ENCODE measurements at regions of chr12 and their contacts with region 1.

Region 1: DNA sequence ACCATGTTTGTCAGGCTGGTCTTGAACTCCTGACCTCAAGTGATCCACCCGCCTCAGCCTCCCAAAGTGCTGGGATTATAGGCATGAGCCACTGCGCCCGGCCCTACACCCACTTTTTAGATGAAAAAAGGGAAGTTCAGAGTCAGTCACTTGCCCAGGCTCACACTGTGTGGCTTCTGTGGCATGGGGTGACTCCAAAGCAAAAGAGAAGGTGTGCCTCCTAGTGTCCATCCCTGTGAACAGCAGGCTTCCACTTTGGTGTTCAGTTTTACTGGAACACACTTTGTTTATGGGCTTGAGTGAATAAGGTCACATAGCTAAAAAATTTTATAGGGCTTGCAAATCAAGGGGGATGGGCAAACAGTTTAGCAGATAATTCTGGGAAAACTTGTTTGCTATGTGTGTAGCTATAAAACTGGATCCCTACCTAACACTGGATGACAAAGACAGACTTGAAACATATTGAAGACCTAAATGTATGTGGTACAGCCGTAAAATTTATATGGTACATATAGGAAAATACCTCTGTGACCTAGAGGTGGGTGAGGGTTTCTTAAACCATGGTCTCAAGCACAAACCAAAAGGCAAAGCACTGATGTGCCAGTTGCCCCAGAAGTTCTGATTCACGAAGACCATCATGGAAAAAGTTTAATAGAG is 54.9 kb downstream of the EID3 start:
- DNase-seq: peak in 1 of 2 experiments; percentile 74
- H3K4me3 ChIP-seq: no peak overlapping the region
- H3K27ac ChIP-seq: no peak overlapping the region
- H3K4me1 ChIP-seq: no peaks in the 10 kb centered on the region
- H3K27me3 ChIP-seq: no peaks in the 10 kb centered on the region
- CTCF ChIP-seq: peak; percentile 71 to 93 (median 77)
- EP300 ChIP-seq: no peak
- POLR2A ChIP-seq: no peak
- RAD21 ChIP-seq: peak; percentile 85

Region 2: DNA sequence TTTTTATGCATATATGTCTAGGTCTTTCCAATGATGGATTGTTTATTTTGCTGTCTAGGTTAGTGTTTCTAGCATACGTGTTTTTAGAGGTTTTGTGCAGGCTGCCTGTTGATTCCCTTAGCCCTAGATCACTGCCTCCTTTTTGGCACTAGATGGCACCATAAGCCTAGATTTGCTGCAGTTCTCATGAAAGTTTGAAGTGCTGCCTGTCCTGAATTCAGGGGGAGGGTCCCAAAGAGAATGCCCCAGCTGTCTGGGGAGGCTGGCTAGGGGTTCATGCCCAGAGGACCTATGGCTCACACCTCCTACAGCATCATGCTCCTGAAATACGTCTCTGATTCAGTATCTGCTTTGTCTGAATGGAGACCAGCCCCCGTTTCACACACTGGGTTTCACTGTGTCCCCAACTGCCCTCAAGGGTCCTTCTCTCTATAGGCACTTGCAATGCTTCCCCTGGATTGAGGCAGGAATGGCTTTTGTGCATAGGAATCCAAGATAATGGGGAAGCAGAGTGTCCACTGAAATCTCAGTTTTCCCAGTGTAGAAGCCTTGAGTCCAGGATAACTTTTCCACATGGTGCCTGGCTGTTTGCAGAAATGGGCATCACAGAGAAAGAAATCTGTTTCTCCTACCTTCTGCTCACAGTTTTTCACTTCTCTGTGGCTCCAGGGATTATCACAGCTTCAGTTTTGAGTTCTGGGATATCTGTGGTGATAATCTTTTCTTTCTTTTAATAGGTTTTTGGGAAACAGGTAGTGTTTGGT is 157.1 kb before region 1 on chr12:
- CTCF ChIA-PET with region 1: interaction called, 12 read pairs
- POLR2A ChIA-PET with region 1: no interaction called
- DNase-seq: peak in 1 of 2 experiments; percentile 69
- H3K4me3 ChIP-seq: no peak overlapping the region
- H3K27ac ChIP-seq: no peak overlapping the region
- H3K4me1 ChIP-seq: peaks cover 0 to 4% (median 0%) of the 10 kb centered on the region in 4 experiments; a peak in 1 of 7 replicates
- H3K27me3 ChIP-seq: no peaks in the 10 kb centered on the region
- CTCF ChIP-seq: peak; percentile 4 to 95 (median 80)
- EP300 ChIP-seq: no peak
- POLR2A ChIP-seq: no peak
- RAD21 ChIP-seq: peak; percentile 99

Region 3: DNA sequence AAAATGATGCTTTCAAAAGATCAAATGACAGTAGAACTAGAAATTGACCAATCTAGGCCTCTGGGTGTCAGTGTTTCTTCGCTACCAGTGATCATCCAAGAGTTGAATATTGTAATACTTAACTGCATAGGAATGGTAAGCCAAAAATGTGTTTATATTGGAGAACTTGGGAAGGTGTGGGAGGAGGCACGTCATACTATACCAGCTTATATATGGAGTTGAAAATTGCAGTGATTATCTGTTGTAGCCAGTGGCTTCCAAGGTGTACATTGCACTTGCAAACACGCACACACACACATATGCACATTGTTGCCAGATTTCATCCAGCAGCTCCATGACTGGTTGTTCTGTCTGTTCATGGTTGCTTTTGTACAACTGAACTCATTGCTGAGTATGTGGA is 18.8 kb before region 1 on chr12:
- CTCF ChIA-PET with region 1: interaction called, 16 read pairs
- POLR2A ChIA-PET with region 1: interaction called, 10 read pairs
- DNase-seq: no peak
- H3K4me3 ChIP-seq: no peak overlapping the region
- H3K27ac ChIP-seq: no peak overlapping the region
- H3K4me1 ChIP-seq: no peaks in the 10 kb centered on the region
- H3K27me3 ChIP-seq: no peaks in the 10 kb centered on the region
- CTCF ChIP-seq: no peak
- EP300 ChIP-seq: no peak
- POLR2A ChIP-seq: no peak
- RAD21 ChIP-seq: no peak

Region 4: GRCh38 chr12:104494137-104494792 is 135.8 kb after region 1 on chr12:
- CTCF ChIA-PET with region 1: no interaction called
- POLR2A ChIA-PET with region 1: no interaction called
- DNase-seq: no peak
- H3K4me3 ChIP-seq: no peak overlapping the region
- H3K27ac ChIP-seq: no peak overlapping the region; the same call in 1 of the 2 replicates
- H3K4me1 ChIP-seq: peaks cover 0 to 3% (median 0%) of the 10 kb centered on the region in 4 experiments; a peak in 1 of 7 replicates
- H3K27me3 ChIP-seq: no peaks in the 10 kb centered on the region
- CTCF ChIP-seq: no peak
- EP300 ChIP-seq: no peak
- POLR2A ChIP-seq: no peak
- RAD21 ChIP-seq: no peak